Tibial artery (tissue), 4 donors: ENCODE measurements at regions of chr12 and their contacts with region 1.

Region 1: DNA sequence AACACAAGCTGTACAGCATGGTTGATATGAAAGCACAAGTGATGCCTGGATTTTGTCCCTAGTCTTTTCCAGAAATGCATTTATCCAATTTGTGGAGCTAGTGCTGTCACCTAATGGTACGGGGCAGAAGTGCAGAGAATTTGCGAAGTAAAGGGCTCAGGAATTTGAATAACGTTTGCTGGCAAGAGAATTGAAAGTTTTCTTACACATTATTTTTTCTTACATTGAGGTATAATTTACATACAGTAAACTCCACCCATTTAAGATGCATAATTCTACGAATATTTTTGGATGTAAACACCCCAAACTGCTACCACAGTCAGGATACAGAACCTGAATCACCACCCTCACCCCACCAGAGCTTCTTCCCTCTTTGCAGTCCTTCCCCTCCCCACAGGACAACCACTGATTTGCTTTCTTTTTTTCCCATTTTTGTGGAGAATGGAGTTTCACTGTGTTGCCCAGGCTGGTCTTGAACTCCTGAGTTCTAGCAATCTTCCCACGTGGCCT is 3.5 kb downstream of the AICDA start:
- DNase-seq: no peak
- H3K4me3 ChIP-seq: no peak overlapping the region
- H3K27ac ChIP-seq: no peak overlapping the region
- H3K4me1 ChIP-seq: peaks cover 0 to 3% (median 0%) of the 10 kb centered on the region in 4 donors
- H3K27me3 ChIP-seq: no peaks in the 10 kb centered on the region
- CTCF ChIP-seq: peak; percentile 48 to 60

Region 2: GRCh38 chr12:8544295-8544694 is 64.8 kb before region 1 on chr12:
- intact Hi-C with region 1: loop called (anchors 5 kb)
- DNase-seq: peak; percentile 39 to 74
- H3K4me3 ChIP-seq: no peak overlapping the region
- H3K27ac ChIP-seq: no peak overlapping the region
- H3K4me1 ChIP-seq: no peaks in the 10 kb centered on the region
- H3K27me3 ChIP-seq: no peaks in the 10 kb centered on the region
- CTCF ChIP-seq: peak; percentile 76 to 91